Activated T-helper 2 cell treated with anti-CD3 and anti-CD28 coated beads, Interferon-gamma antibody, Interleukin-2, Interleukin-4, amounts not matched to agents 10 μg/mL and 5 μg/mL and 100 μg/mL, durations not matched to agents 14 hours and 24 hours and 36 hours (primary cell): ENCODE measurements at regions of chr1 and their contacts with region 1.

Region 1: GRCh38 chr1:212291505-212292134 is 6.4 kb downstream of the PPP2R5A start:
- DNase-seq: no peak
- H3K4me3 Mint-ChIP-seq: no peak overlapping the region
- H3K27ac Mint-ChIP-seq: peak overlapping the region; percentile 60
- H3K4me1 Mint-ChIP-seq: peaks cover 71% of the 10 kb centered on the region
- H3K27me3 Mint-ChIP-seq: no peaks in the 10 kb centered on the region

Region 2: GRCh38 chr1:211935448-211935970 is 356.1 kb before region 1 on chr1:
- intact Hi-C with region 1: loop called (anchors 5 kb)
- DNase-seq: no peak
- H3K4me3 Mint-ChIP-seq: peak overlapping the region; percentile 3
- H3K27ac Mint-ChIP-seq: peak overlapping the region; percentile 6
- H3K4me1 Mint-ChIP-seq: peaks cover 43% of the 10 kb centered on the region
- H3K27me3 Mint-ChIP-seq: peaks cover 2% of the 10 kb centered on the region

Region 3: DNA sequence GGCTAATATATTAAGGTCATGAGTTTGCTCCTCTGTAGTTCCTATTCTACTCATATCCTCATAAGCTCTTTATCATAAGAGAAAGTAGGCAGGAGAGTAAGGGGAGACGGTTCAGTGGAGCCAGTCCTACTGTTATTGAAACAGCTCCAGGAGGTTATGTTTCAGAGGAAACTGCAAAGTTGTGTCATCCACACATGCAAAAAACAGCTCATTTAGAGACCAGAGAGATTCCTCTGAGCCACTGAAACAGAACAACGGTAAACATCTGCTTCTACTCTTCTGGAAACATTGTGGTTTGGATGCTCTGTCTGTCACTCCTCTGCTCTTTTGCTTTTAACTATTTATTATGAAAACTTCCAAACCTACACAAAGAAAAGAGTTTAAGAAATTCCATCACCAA is 72.7 kb before region 1 on chr1:
- intact Hi-C with region 1: loop called (anchors 5 kb)
- DNase-seq: no peak
- H3K4me3 Mint-ChIP-seq: no peak overlapping the region
- H3K27ac Mint-ChIP-seq: peak overlapping the region; percentile 29
- H3K4me1 Mint-ChIP-seq: peaks cover 18% of the 10 kb centered on the region
- H3K27me3 Mint-ChIP-seq: peaks cover 2% of the 10 kb centered on the region

Region 4: GRCh38 chr1:212302745-212303383 is 11.2 kb after region 1 on chr1:
- intact Hi-C with region 1: loop called (anchors 1 kb)
- DNase-seq: no peak
- H3K4me3 Mint-ChIP-seq: no peak overlapping the region
- H3K27ac Mint-ChIP-seq: peak overlapping the region; percentile 39
- H3K4me1 Mint-ChIP-seq: peaks cover 26% of the 10 kb centered on the region
- H3K27me3 Mint-ChIP-seq: no peaks in the 10 kb centered on the region

Region 5: DNA sequence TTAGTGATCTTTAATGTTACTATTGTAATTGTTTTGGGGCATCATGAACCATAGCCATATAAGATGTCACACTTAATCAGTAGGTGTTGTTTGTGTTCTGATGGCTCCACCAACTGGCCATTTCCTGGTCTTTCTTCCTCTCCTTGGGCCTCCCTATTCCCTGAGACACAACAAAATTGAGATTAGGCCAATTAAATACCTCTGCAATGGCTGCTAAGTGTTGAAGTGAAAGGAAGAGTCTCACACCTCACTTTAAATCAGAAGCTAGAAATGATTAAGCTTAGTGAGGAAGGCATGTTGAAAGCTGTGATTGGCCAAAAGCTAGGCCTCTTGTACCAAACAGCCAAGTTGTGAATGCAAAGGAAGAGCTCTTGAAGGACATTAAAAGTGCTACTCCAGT is 24.3 kb after region 1 on chr1:
- intact Hi-C with region 1: loop called (anchors 2 kb)
- DNase-seq: no peak
- H3K4me3 Mint-ChIP-seq: no peak overlapping the region
- H3K27ac Mint-ChIP-seq: peak overlapping the region; percentile 3
- H3K4me1 Mint-ChIP-seq: peaks cover 20% of the 10 kb centered on the region
- H3K27me3 Mint-ChIP-seq: no peaks in the 10 kb centered on the region